Breast epithelium (tissue), 4 donors: ENCODE measurements at regions of chr3 and their contacts with region 1.

Region 1: GRCh38 chr3:170536712-170537111 is 49.2 kb downstream of the SLC7A14 start:
- DNase-seq: no peak
- H3K4me3 ChIP-seq: no peak overlapping the region
- H3K27ac ChIP-seq: no peak overlapping the region
- H3K4me1 ChIP-seq: no peaks in the 10 kb centered on the region
- H3K27me3 ChIP-seq: no peaks in the 10 kb centered on the region
- CTCF ChIP-seq: no peak
- POLR2A ChIP-seq: no peak

Region 2: GRCh38 chr3:170517242-170517945 is 19.3 kb before region 1 on chr3:
- intact Hi-C with region 1: loop called (anchors 1 kb)
- DNase-seq: no peak
- H3K4me3 ChIP-seq: no peak overlapping the region
- H3K27ac ChIP-seq: no peak overlapping the region
- H3K4me1 ChIP-seq: no peaks in the 10 kb centered on the region
- H3K27me3 ChIP-seq: no peaks in the 10 kb centered on the region
- CTCF ChIP-seq: no peak
- POLR2A ChIP-seq: no peak

Region 3: DNA sequence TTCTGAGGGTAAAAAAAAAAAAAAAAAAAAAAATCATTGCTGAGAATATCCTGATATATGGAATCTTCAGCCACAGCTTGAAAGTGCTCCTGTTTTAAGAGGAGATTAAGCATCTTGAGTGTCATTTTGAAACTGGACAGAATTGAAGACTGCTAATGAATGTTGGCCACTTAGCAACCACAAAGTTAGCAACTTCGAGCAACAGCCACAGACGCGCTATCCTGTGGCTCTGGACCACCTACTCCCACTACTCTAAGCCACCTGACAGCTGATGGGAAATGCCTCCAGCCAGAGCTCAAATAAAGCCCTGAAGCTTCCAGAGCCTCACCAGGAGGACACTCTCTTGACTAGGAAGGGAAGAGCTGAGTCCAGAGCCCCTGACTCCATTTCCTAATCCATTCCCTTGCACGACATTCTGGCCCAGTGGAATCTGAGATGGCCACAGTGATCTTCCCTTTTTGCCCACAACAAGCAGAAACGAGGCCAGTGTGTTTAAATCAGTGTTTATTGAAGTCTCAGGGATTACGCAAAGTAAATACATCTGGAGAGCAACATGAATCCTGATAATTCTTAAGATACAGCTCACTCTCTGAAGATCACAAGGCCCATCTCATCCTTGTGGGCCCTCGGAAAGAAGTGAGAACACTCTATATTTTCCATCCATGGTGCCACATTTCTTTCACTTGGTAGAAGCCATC is 1365.1 kb after region 1 on chr3:
- intact Hi-C with region 1: no loop called
- DNase-seq: no peak
- H3K4me3 ChIP-seq: no peak overlapping the region
- H3K27ac ChIP-seq: no peak overlapping the region
- H3K4me1 ChIP-seq: no peaks in the 10 kb centered on the region
- H3K27me3 ChIP-seq: no peaks in the 10 kb centered on the region
- CTCF ChIP-seq: no peak
- POLR2A ChIP-seq: no peak